Stomach (tissue), 19 donors: ENCODE measurements at regions of chr9 and their contacts with region 1.

Region 1: GRCh38 chr9:136787690-136788400 is 3.3 kb upstream of the TMEM141 start:
- DNase-seq: peak; percentile 70 to 90
- H3K4me3 ChIP-seq: no peak overlapping the region
- H3K27ac ChIP-seq: peak overlapping the region in 2 of 5 donors; percentile 7 to 24
- H3K4me1 ChIP-seq: peaks cover 22 to 50% (median 47%) of the 10 kb centered on the region in 4 donors
- H3K27me3 ChIP-seq: no peaks in the 10 kb centered on the region
- CTCF ChIP-seq: peak in 5 of 7 experiments; percentile 60 to 90 (median 87)
- EP300 ChIP-seq: no peak
- POLR2A ChIP-seq: no peak

Region 2: GRCh38 chr9:136858844-136859757 is 71.3 kb after region 1 on chr9:
- intact Hi-C with region 1: no loop called
- DNase-seq: peak; percentile 72 to 95
- H3K4me3 ChIP-seq: peak overlapping the region in 1 of 4 donors; percentile 13
- H3K27ac ChIP-seq: peak overlapping the region; percentile 76 to 90 (median 81)
- H3K4me1 ChIP-seq: peaks cover 43 to 87% (median 77%) of the 10 kb centered on the region in 4 donors
- H3K27me3 ChIP-seq: no peaks in the 10 kb centered on the region
- CTCF ChIP-seq: no peak
- EP300 ChIP-seq: no peak
- POLR2A ChIP-seq: no peak

Region 3: DNA sequence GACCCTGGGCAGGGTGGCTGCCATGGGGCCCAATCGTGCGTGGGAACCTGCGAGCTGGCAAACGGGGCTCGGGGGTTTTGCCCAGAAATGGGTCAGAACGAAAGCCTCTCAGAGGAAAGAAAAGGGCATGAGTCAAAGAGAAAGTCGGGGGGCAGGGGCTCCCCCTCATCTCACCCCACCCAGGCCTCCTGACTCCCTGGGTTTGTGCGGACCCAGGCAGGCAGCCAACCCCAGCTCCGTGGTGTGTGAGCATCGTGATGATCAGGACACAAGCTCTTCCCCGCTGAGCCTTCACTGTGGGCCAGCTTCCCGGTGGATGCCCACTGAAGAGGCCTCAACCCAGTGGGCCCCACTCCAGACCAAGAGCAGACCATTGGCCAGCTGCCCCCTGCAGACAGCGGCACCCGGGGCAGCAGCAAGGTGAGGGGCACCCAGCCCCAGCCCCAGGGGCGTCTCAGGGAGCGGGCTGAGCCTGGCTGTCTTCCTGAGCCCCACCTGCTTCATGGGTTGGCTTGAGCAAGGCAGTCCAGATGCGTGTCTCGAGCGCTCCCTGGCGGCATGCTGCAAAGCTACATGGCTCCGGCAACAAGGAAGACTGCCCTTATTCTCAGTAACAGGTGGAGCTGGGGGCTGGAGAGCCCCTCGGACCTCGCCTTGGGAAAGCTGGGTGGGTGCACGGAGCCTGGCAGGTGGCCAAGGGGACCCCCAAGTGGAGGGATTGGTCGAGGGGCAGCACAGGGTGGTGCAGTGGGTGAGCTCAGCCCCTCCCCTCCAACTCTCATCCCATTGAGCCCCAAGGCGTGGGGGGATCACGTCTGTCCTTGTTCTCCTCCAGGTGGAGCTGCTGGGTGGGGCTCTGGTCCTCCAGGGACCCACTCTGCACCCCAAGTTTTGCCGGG is 247.3 kb after region 1 on chr9:
- intact Hi-C with region 1: loop called (anchors 5 kb)
- DNase-seq: peak; percentile 82 to 96
- H3K4me3 ChIP-seq: peak overlapping the region in 1 of 4 donors; percentile 18
- H3K27ac ChIP-seq: peak overlapping the region in 2 of 5 donors; percentile 56 to 59
- H3K4me1 ChIP-seq: peaks cover 9 to 37% (median 28%) of the 10 kb centered on the region in 4 donors
- H3K27me3 ChIP-seq: peaks cover 0 to 6% (median 0%) of the 10 kb centered on the region in 3 donors
- CTCF ChIP-seq: peak in 6 of 7 experiments; percentile 11 to 90 (median 86)
- EP300 ChIP-seq: no peak
- POLR2A ChIP-seq: no peak